Posterior vena cava (tissue), 2 donors: ENCODE measurements at regions of chr7 and their contacts with region 1.

Region 1: DNA sequence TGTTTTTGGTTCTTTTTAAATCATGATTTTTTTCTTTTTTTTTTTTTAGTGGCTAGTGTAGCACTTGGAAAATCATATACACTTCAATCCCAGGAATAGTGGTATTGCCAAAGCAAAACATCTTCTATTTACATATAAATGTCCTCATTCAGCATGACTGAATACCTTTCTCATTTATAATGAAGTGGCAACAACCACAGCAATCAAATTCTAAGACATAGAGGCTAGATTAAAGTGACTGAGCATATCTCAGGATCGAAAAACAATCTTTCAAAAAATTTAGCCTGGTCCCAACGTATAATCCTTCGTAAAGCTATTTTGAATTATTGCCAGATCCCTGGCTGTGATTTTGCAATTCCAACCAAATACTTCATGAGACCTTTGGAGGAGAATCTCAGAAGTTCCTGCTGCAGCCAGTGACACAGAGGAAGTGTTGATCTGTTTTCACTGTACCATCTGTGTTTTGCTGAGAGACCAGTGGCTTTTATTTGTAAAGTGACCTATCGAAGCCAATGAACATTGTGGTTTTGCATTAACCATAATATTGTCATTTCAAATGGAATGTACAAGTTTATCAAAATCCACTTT is 29.8 kb upstream of the SP8 start:
- DNase-seq: no peak

Region 2: DNA sequence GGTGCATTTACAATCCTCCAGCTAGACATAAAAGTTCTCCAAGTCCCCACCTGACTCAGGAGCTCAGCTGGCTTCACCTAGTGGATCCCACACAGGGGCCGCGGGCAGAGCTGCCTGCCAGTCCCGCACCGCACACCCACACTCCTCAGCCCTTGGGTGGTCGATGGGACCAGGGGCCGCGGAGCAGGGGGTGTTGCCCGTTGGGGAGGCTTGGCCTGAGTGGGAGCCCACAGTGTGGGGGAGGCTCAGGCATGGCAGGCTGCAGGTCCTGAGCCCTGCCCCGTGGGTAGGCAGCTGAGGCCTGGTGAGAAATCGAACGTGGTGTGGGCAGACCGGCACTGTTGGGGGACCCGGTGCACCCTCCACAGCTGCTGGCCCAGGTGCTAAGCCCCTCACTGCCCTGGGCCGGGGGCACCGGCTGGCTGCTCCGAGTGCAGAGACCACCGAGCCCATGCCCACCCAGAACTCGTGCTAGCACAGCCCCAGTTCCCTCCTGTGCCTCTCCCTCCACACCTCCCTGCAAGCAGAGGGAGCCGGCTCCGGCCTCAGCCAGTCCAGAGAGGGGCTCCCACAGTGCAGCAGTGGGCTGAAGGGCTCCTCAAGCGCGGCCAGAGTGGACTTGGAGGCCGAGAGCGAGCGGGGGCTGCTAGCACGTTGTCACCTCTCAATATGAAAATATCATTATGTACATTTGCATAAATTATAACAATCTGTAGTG is 1124.2 kb before region 1 on chr7:
- intact Hi-C with region 1: loop called in 1 of 2 experiments (anchors 5 kb)
- DNase-seq: no peak